ENCODE measurements at regions of chr7 and their contacts with region 1.

Region 1: GRCh38 chr7:7207876-7208275 is 25.5 kb downstream of the C1GALT1 start:
- DNase-seq: no peak
- ATAC-seq: no peak
- H3K4me3 Mint-ChIP-seq: no peak overlapping the region
- H3K27ac Mint-ChIP-seq: no peak overlapping the region
- H3K4me1 Mint-ChIP-seq: peaks cover 67% of the 10 kb centered on the region
- H3K27me3 Mint-ChIP-seq: no peaks in the 10 kb centered on the region

Region 2: DNA sequence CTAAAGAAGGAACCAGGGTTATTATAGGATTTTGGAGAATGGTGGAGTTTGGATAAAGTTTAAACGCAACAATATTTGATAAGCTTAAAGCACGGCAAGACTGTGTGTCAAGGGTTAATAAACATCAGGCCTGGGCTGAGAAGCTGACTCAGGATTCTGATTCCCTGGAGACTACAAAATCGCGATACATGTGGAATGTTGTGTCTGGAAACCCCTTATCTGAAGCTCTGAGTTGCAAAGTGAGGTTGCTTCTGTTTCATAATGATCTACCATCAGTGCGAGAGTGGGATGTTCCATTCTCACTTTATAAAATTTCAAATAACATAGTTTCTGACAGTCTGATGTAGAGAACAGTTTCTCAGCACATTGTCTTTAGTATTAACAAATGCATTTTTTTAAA is 17.7 kb before region 1 on chr7:
- CTCF ChIA-PET with region 1: no interaction called
- POLR2A ChIA-PET with region 1: no interaction called
- intact Hi-C with region 1: loop called in 1 of 2 experiments (anchors 2 kb)
- DNase-seq: no peak
- ATAC-seq: no peak
- H3K4me3 Mint-ChIP-seq: no peak overlapping the region
- H3K27ac Mint-ChIP-seq: no peak overlapping the region
- H3K4me1 Mint-ChIP-seq: peaks cover 39% of the 10 kb centered on the region
- H3K27me3 Mint-ChIP-seq: no peaks in the 10 kb centered on the region

Region 3: GRCh38 chr7:7226407-7226806 is 18.5 kb after region 1 on chr7:
- CTCF ChIA-PET with region 1: no interaction called
- POLR2A ChIA-PET with region 1: no interaction called
- intact Hi-C with region 1: loop called in 1 of 2 experiments (anchors 2 kb)
- DNase-seq: no peak
- ATAC-seq: no peak
- H3K4me3 Mint-ChIP-seq: no peak overlapping the region
- H3K27ac Mint-ChIP-seq: no peak overlapping the region
- H3K4me1 Mint-ChIP-seq: peaks cover 20% of the 10 kb centered on the region
- H3K27me3 Mint-ChIP-seq: no peaks in the 10 kb centered on the region